Dendritic cell treated with granulocyte-macrophage colony-stimulating factor and Interleukin-4, amounts not matched to agents 40 ng/mL and 50 ng/mL, for 4 days (primary cell): ENCODE measurements at regions of chr20 and their contacts with region 1.

Region 1: GRCh38 chr20:2508631-2509467 is at the start of gene ZNF343:
- H3K4me3 Mint-ChIP-seq: peak within 1 kb of the TSS; percentile 97
- H3K27ac Mint-ChIP-seq: peak within 1 kb of the TSS; percentile 94
- H3K4me1 Mint-ChIP-seq: peaks cover 21% of the 10 kb centered on the region
- H3K27me3 Mint-ChIP-seq: peaks cover 9% of the 10 kb centered on the region

Region 2: DNA sequence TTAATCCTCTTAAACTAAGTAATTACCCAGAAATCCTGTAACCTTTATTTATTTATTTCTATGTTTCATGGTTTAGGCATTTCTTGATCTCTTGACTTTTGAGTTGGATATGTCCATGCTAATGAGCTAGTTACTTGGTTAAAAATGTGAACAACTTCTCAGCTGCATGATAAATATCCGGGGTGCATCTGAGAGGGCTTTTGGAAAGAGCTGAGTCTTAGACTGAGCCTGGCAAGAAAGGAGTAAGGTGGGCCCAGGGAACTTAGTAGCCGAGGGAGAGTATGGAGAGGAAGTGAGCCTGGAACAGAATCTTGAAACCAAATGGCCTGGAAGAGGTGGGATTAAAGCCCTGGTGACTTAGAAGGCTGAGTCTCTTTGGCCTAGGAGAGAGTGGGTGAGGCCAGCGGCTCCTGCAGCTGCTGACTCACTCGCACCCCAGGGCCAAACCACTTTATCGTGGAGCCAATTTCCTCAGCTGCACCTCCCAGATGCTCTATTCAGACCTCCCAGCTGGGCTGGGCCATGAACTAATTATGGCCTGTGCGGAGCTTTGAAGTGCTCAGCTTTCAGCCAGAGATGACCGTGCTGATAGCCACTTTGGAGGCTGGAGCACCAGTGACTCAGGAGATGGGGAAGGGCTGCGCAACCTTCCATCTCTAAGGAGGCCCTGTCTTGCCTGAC is 193.9 kb before region 1 on chr20:
- intact Hi-C with region 1: no loop called
- H3K4me3 Mint-ChIP-seq: no peak overlapping the region
- H3K27ac Mint-ChIP-seq: peak overlapping the region; percentile 89
- H3K4me1 Mint-ChIP-seq: peaks cover 60% of the 10 kb centered on the region
- H3K27me3 Mint-ChIP-seq: no peaks in the 10 kb centered on the region

Region 3: GRCh38 chr20:2470423-2471193 is 38.2 kb before region 1 on chr20 and contains the start of gene SNRPB:
- intact Hi-C with region 1: loop called (anchors 1 kb)
- H3K4me3 Mint-ChIP-seq: peak within 1 kb of the TSS; percentile 97
- H3K27ac Mint-ChIP-seq: peak within 1 kb of the TSS; percentile 98
- H3K4me1 Mint-ChIP-seq: peaks cover 41% of the 10 kb centered on the region
- H3K27me3 Mint-ChIP-seq: no peaks in the 10 kb centered on the region